ENCODE measurements at regions of chr20 and their contacts with region 1.

Region 1: GRCh38 chr20:38113401-38114325 is 51.4 kb downstream of the TGM2 start:
- H3K4me3 ChIP-seq: no peak overlapping the region
- H3K27ac ChIP-seq: no peak overlapping the region
- H3K4me1 ChIP-seq: peaks cover 9% of the 10 kb centered on the region
- CTCF ChIP-seq: 0 out of 2 replicates have a peak, but pooled peaks have one; percentile 41

Region 2: GRCh38 chr20:37932900-37933299 is 180.8 kb before region 1 on chr20:
- CTCF ChIA-PET with region 1: no interaction called
- POLR2A ChIA-PET with region 1: no interaction called
- H3K4me3 ChIP-seq: no peak overlapping the region
- H3K27ac ChIP-seq: no peak overlapping the region
- H3K4me1 ChIP-seq: no peaks in the 10 kb centered on the region
- CTCF ChIP-seq: no peak

Region 3: GRCh38 chr20:38127011-38127621 is 13.5 kb after region 1 on chr20:
- CTCF ChIA-PET with region 1: interaction called, 19 read pairs
- POLR2A ChIA-PET with region 1: no interaction called
- H3K4me3 ChIP-seq: no peak overlapping the region
- H3K27ac ChIP-seq: no peak overlapping the region
- H3K4me1 ChIP-seq: no peaks in the 10 kb centered on the region
- CTCF ChIP-seq: no peak

Region 4: GRCh38 chr20:38165089-38165989 is 51.7 kb after region 1 on chr20 and contains the start of gene TGM2:
- CTCF ChIA-PET with region 1: interaction called, 49 read pairs
- POLR2A ChIA-PET with region 1: no interaction called
- H3K4me3 ChIP-seq: peak within 1 kb of the TSS; percentile 32
- H3K27ac ChIP-seq: no peak within 1 kb of the TSS
- H3K4me1 ChIP-seq: no peaks in the 10 kb centered on the region
- CTCF ChIP-seq: peak; percentile 88

Region 5: DNA sequence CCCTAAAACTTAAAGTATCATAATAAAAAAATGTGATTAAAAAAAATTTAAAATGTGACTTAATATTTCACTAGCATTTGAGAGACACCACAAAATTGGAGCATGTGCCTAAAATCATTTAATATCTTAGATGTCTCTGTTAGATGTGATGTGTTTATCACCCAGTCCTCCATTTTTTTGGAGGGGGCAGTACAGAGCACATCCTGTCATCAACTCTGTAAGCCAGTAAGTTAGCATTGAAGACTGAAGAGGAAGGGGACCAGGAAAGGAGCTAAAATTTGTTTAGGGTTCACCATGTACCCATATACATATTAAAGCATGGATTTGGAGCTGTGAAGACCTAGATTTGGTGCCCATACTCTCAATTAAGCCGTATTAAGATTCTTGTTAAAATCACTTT is 436.6 kb after region 1 on chr20:
- CTCF ChIA-PET with region 1: no interaction called
- POLR2A ChIA-PET with region 1: no interaction called
- H3K4me3 ChIP-seq: no peak overlapping the region
- H3K27ac ChIP-seq: no peak overlapping the region
- H3K4me1 ChIP-seq: no peaks in the 10 kb centered on the region
- CTCF ChIP-seq: 0 out of 2 replicates have a peak, but pooled peaks have one; percentile 10